PC-9 (cell line): ENCODE measurements at regions of chr1 and their contacts with region 1.

Region 1: DNA sequence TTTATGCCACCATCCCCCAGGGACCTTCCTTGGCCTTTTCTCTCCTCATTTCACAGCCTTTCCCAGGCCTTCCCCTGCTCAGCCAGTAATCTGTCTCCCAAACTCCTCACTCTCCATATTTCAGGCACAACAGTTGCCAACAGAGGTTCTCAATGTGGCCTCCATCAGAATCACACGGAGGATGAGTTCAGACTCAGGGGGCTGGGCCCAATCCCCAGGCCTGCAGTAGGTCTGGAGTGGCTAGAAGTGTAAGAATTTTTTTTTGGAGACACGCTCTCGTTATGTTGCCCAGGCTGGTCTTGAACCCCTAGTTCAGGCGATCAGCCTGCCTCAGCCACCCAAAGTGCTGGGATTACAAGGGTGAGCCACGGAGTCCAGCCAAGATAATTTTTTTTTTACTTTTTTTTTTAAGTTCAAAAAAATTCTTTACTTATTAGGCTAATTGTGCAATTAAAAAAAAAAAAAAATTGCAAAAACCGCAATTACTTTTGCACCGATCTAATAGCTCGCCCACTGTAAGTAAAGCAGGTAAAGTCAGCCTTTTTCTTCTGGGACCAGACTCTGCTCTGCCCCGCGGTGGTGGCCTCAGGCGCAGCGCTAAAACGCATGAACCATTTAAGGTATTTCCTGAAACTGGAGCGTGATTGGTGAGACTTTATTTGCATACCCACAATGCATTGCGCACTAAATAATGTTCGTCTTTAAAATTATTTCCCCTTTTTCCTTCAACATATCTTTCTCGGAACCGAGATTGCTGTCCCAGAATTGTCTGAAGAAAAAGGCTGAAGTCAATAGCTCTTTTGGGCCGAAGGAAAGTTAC is 18.7 kb downstream of the KIAA2013 start:
- DNase-seq: peak; percentile 86 to 88
- H3K4me3 ChIP-seq: peak overlapping the region; percentile 36; the same call in 1 of the 2 replicates
- H3K27ac ChIP-seq: peak overlapping the region; percentile 98
- H3K4me1 ChIP-seq: peaks cover 4% of the 10 kb centered on the region; the same call in 1 of the 2 replicates
- H3K27me3 ChIP-seq: no peaks in the 10 kb centered on the region
- CTCF ChIP-seq: peak; percentile 46; the same call in 1 of the 2 replicates

Region 2: GRCh38 chr1:11735854-11736745 is 171.4 kb before region 1 on chr1 and contains the start of gene AGTRAP:
- CTCF ChIA-PET with region 1: no interaction called
- POLR2A ChIA-PET with region 1: interaction called, 10 read pairs
- intact Hi-C with region 1: no loop called
- DNase-seq: peak; percentile 78 to 91
- H3K4me3 ChIP-seq: peak within 1 kb of the TSS; percentile 79
- H3K27ac ChIP-seq: peak within 1 kb of the TSS; percentile 96
- H3K4me1 ChIP-seq: peaks cover 9% of the 10 kb centered on the region
- H3K27me3 ChIP-seq: no peaks in the 10 kb centered on the region
- CTCF ChIP-seq: no peak
- total RNA-seq, gene AGTRAP: 75.5 and 77.7 TPM in 2 replicates

Region 3: GRCh38 chr1:11790880-11791715 is 116.4 kb before region 1 on chr1:
- CTCF ChIA-PET with region 1: no interaction called
- POLR2A ChIA-PET with region 1: no interaction called
- intact Hi-C with region 1: no loop called
- DNase-seq: peak in 1 of 2 experiments; percentile 70
- H3K4me3 ChIP-seq: no peak overlapping the region
- H3K27ac ChIP-seq: no peak overlapping the region
- H3K4me1 ChIP-seq: peaks cover 4% of the 10 kb centered on the region
- H3K27me3 ChIP-seq: no peaks in the 10 kb centered on the region
- CTCF ChIP-seq: no peak

Region 4: DNA sequence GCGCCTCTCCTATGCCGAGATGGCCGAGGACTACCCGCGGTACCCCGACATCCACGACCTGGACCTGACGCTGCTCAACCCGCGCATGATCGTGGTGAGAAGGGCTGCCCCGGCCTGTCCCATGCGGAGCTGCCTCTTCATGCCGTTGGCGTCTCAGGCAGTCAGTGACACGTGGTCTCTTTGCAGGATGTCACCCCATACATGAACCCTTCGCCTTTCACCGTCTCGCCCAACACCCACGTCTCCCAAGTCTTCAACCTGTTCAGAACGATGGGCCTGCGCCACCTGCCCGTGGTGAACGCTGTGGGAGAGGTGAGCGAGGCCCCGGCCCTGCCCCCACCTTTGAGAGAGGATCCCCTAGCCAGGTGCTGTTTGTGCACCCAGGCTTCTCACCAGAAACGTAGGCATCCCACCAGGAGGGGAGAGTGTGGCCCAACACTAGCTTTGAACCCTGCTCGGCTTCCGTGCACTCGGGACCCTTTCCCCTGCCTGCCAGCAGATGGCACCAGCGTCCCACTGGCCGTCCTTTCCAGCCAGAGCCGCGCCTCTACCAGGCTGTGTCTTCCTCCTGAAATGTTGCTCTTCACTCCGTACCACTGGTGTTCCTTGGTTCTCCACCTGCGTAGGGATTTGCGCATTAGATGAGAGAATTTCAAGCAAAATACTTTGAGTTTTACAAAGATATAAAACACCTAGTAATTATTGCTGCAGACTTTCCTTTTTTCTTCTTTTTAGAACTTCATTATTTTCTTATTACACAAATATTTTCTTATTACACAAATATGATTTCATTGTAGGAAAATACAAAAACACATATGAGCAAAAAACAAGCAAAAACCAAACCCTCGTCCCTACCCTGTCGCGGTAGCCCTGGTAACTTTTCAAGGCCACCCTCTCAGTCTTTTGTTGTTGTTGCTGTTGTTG is 68.9 kb before region 1 on chr1:
- CTCF ChIA-PET with region 1: no interaction called
- POLR2A ChIA-PET with region 1: interaction called, 6 read pairs
- intact Hi-C with region 1: loop called (anchors 1 kb)
- DNase-seq: peak in 1 of 2 experiments; percentile 66
- H3K4me3 ChIP-seq: no peak overlapping the region
- H3K27ac ChIP-seq: no peak overlapping the region
- H3K4me1 ChIP-seq: no peaks in the 10 kb centered on the region
- H3K27me3 ChIP-seq: no peaks in the 10 kb centered on the region
- CTCF ChIP-seq: peak; percentile 87

Region 5: DNA sequence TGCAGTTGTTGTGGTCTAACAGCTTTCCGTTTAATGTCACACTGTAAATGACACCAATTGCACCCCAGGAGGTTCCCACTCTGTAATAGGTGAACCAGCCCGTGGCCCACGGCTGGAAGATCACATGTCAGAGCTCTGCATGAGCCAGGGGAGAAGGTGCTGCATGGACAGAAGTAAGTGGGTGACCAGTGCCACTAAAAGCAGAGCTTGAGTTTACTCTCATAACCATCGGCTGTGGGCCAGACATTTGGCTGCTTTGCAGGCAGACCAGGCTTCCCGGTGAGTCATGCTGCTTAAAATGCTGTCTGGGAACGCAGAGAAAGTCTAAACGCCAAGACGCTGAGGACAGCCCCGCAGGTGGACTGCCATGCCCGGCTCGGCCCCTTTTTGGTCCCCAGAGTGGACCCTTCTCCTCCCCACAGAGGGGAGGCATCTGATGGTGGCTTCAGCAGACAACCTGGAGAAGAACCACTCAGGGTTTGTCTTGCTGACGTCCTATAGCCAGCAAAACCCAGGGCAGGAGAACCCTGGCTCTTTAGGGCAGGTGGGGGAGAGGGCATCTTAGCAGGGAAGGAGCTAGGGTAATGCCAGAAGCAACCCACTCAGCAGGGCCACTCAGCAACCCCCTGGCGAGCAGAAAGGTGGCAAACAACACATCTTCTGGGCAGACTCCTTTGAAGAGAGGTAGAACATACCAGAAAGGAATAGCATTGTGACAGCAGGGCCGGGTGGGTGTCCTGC is 11.5 kb after region 1 on chr1:
- CTCF ChIA-PET with region 1: interaction called, 17 read pairs
- POLR2A ChIA-PET with region 1: interaction called, 24 read pairs
- intact Hi-C with region 1: no loop called
- DNase-seq: peak in 1 of 2 experiments; percentile 50
- H3K4me3 ChIP-seq: no peak overlapping the region
- H3K27ac ChIP-seq: no peak overlapping the region
- H3K4me1 ChIP-seq: no peaks in the 10 kb centered on the region
- H3K27me3 ChIP-seq: no peaks in the 10 kb centered on the region
- CTCF ChIP-seq: no peak

Region 6: GRCh38 chr1:11934302-11935056 is 27.0 kb after region 1 on chr1 and contains the start of gene PLOD1:
- CTCF ChIA-PET with region 1: interaction called, 7 read pairs
- POLR2A ChIA-PET with region 1: interaction called, 39 read pairs
- intact Hi-C with region 1: no loop called
- DNase-seq: peak; percentile 38 to 74
- H3K4me3 ChIP-seq: peak within 1 kb of the TSS; percentile 63
- H3K27ac ChIP-seq: no peak within 1 kb of the TSS
- H3K4me1 ChIP-seq: 0 out of 2 replicates have a peak, but pooled peaks cover 5% of the 10 kb centered on the region
- H3K27me3 ChIP-seq: no peaks in the 10 kb centered on the region
- CTCF ChIP-seq: no peak
- total RNA-seq, gene PLOD1: 64.1 and 65.0 TPM in 2 replicates

Region 7: DNA sequence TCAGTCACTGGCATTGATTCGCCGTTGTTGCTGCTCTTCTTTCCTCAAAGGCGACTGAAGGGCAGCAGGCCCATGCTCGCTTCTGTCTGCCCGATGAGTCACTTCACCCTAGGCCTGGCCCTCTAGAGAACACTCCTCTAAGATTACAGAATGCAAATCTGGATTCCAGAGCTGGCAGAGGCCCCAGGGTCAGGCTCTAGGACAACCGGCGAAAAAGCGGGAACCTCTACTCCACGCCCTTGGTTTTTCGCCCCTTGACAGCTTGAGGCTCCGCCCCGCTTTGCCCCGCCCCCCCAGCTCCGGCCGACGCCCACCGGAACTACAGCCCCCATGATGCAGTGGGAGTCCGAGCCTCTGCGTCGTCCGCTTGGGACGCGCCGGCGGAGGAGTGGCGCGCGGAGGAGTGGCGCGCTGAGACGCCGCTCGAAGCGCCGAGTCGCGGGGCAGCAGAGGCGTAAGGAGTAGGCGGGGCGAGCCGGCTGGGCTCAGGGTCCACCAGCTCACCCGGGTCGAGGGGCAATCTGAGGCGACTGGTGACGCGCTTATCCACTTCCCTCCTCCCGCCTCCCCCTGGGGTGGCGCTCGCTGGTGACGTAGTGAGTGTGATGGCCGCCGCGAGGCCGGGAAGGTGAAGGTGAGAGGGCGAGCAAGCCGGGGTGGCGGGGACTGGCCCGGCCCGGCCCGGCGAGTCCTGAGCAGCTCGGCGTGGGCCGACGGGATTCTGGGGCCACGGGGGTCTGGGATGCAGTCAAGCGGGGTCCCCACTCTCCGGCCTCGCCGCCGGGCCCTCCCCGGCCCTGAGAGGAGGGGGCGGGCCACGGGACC is 72.6 kb after region 1 on chr1 and contains the start of gene MFN2:
- CTCF ChIA-PET with region 1: no interaction called
- POLR2A ChIA-PET with region 1: interaction called, 12 read pairs
- intact Hi-C with region 1: loop called (anchors 1 kb)
- DNase-seq: peak; percentile 83 to 94
- H3K4me3 ChIP-seq: peak within 1 kb of the TSS; percentile 85
- H3K27ac ChIP-seq: peak within 1 kb of the TSS; percentile 74
- H3K4me1 ChIP-seq: peaks cover 29% of the 10 kb centered on the region
- H3K27me3 ChIP-seq: no peaks in the 10 kb centered on the region
- CTCF ChIP-seq: no peak
- total RNA-seq, gene MFN2: 54.2 and 72.6 TPM in 2 replicates

Region 8: DNA sequence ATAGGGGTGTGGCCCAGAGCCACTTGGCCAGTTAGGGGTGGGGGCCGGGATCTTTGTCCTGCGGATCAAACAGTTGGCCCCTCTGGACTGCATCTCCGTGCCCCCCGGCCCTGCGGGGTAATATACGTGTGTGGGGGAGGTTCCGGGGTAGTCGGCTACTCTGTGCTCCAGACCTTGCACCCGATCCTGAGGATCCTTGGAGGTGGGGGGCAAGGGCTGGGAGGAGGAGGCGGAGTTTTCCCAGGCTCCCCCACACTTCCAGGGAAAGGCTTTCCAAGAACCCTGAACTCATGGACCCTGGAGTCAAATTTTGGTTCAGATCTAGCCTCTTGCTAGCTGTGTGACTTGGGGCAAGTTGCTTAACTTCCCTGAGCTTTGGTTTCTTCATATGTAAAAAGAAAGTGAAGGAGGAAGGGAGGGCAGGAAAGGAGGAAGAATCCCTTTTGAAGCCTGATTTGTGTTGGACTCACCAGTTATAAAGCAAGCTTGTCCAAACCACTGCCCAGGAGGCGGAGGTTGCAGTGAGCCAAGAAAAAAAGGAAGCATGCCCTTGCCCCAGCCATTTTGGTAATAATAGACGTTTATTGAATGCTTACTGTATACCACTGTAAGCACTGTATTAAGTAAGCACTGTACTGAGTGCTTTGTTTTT is 112.5 kb after region 1 on chr1:
- CTCF ChIA-PET with region 1: no interaction called
- POLR2A ChIA-PET with region 1: interaction called, 33 read pairs
- intact Hi-C with region 1: loop called (anchors 2 kb)
- DNase-seq: no peak
- H3K4me3 ChIP-seq: peak overlapping the region; percentile 74
- H3K27ac ChIP-seq: no peak overlapping the region
- H3K4me1 ChIP-seq: no peaks in the 10 kb centered on the region; the same call in 1 of the 2 replicates
- H3K27me3 ChIP-seq: no peaks in the 10 kb centered on the region
- CTCF ChIP-seq: no peak